PC-9 (cell line): ENCODE measurements at regions of chr2 and their contacts with region 1.

Region 1: GRCh38 chr2:61764035-61764800 is 89.6 kb downstream of the FAM161A start:
- DNase-seq: peak; percentile 95 to 99
- H3K4me3 ChIP-seq: peak overlapping the region; percentile 77
- H3K27ac ChIP-seq: peak overlapping the region; percentile 98
- H3K4me1 ChIP-seq: peaks cover 45% of the 10 kb centered on the region
- H3K27me3 ChIP-seq: no peaks in the 10 kb centered on the region
- CTCF ChIP-seq: no peak

Region 2: GRCh38 chr2:60699617-60700016 is 1064.6 kb before region 1 on chr2:
- CTCF ChIA-PET with region 1: no interaction called
- POLR2A ChIA-PET with region 1: interaction called, 13 read pairs
- intact Hi-C with region 1: no loop called
- DNase-seq: no peak
- H3K4me3 ChIP-seq: no peak overlapping the region
- H3K27ac ChIP-seq: no peak overlapping the region
- H3K4me1 ChIP-seq: no peaks in the 10 kb centered on the region
- H3K27me3 ChIP-seq: no peaks in the 10 kb centered on the region
- CTCF ChIP-seq: no peak

Region 3: DNA sequence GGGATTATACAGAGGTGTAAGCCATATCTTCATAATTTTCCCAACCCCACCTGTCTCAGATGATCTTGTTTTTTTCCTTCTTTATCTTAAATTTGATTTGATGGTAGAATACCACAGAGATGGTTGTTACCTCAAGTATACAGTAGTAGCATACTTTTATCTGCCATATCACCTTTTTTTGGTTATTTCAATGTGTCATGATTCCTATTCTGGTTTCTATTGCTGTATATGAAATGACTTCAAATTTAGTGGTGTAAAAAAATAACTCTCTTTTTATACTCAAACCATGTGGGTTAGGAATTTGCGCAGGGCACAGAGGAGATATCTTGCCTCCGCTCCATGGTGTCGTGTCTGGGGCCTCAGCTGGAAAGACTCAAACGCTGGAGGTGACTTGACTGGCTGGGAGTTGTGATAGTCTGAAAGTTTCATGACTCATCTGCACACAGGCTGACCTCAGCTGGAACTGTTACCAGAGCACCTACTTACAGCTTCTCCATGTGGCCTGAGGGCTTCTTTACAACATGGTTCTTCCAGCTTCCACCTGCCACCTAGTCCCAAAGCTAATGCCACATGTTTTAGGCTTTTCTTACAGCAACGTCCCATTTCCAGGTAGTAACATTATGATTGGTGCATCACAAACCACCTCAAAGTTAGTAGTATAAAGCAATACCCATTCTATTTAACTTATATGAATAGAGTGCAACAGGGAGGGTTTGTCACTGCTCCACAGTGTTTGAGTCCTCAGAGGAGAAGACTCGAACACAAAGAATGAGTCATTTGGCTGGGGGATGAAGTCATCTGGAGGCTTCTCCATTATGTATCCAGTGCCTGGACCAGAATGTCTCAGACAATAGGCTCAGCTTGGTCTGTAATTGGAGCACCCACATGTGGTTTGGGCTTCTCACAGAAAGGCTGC is 143.7 kb before region 1 on chr2:
- CTCF ChIA-PET with region 1: no interaction called
- POLR2A ChIA-PET with region 1: interaction called, 3 read pairs
- intact Hi-C with region 1: loop called (anchors 5 kb)
- DNase-seq: peak; percentile 72 to 93
- H3K4me3 ChIP-seq: no peak overlapping the region
- H3K27ac ChIP-seq: peak overlapping the region; percentile 56
- H3K4me1 ChIP-seq: peaks cover 22% of the 10 kb centered on the region
- H3K27me3 ChIP-seq: no peaks in the 10 kb centered on the region
- CTCF ChIP-seq: no peak

Region 4: DNA sequence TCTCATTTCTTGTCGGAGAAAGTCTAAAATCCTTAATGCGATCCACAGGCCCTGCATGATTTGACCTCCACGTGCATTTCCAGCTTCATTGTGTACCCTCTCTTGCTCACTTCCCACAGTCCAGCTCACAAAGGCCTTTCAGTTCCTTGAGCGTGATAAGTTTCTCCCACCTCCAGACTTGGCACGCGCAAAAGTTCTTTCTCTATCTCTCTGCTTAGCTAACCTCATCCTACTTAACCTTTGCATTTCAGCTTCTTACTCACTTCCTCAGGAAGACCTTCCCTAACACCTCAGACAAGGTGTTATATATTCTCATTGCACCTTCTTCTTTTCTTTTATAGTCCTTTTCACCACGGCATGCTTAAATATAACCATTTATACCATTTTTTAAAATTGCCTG is 101.2 kb before region 1 on chr2:
- CTCF ChIA-PET with region 1: no interaction called
- POLR2A ChIA-PET with region 1: no interaction called
- intact Hi-C with region 1: no loop called
- DNase-seq: no peak
- H3K4me3 ChIP-seq: no peak overlapping the region
- H3K27ac ChIP-seq: no peak overlapping the region
- H3K4me1 ChIP-seq: peaks cover 10% of the 10 kb centered on the region; the same call in 1 of the 2 replicates
- H3K27me3 ChIP-seq: no peaks in the 10 kb centered on the region
- CTCF ChIP-seq: no peak

Region 5: DNA sequence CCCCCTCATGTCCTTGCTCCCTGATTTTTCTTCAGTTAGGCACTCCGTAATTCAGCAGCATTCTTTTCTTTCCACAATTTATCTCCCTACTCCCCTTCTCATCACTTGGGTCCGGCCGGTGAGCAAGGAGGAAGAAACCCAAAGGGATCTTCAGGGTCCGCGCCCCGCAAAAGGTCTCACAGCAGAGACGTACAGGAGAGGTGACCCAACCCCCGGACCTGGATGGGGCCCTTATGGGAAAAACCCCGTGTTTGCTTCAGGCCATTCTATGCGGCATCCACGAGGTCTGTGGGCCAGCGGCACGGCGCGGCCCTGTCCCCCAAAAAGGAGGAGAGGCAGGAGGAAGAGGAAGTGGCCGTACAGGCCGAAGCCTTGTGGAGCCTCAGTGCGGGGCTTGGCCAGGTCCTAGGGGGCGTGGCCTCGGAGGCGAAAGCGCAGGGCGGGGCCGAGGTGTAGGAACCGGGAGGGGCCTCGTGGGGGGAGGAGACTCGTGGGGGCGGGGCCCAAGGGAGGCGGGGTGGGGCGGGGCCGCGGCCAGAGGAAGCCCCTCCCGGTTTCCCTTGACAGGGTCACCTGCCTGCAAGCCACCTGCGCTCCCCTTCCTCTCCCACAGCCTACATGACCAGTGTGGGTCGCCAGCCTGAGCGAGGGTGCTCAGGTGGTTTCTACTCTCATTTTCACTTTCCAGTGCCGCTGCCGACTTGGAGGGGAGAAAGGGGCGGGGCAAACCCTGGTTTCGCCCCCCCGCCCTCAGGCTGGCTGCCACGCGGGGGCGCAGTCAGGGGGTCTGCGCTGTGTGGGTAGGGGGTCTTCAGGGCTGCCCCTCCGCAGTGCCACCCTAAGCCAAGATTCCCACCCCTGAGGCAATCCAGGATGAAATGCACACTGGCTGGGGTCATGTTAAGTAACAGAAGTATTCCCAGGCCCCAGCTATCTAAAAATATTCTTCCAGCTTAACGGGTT is 69.6 kb before region 1 on chr2:
- CTCF ChIA-PET with region 1: no interaction called
- POLR2A ChIA-PET with region 1: no interaction called
- intact Hi-C with region 1: loop called (anchors 1 kb)
- DNase-seq: peak; percentile 74 to 97
- H3K4me3 ChIP-seq: peak overlapping the region; percentile 78
- H3K27ac ChIP-seq: peak overlapping the region; percentile 69
- H3K4me1 ChIP-seq: peaks cover 7% of the 10 kb centered on the region; the same call in 1 of the 2 replicates
- H3K27me3 ChIP-seq: no peaks in the 10 kb centered on the region
- CTCF ChIP-seq: peak; percentile 58

Region 6: GRCh38 chr2:61854474-61855182 is 90.4 kb after region 1 on chr2:
- CTCF ChIA-PET with region 1: no interaction called
- POLR2A ChIA-PET with region 1: interaction called, 3 read pairs
- intact Hi-C with region 1: loop called (anchors 1 kb)
- DNase-seq: peak; percentile 92 to 96
- H3K4me3 ChIP-seq: peak overlapping the region; percentile 86
- H3K27ac ChIP-seq: peak overlapping the region; percentile 49
- H3K4me1 ChIP-seq: peaks cover 14% of the 10 kb centered on the region
- H3K27me3 ChIP-seq: no peaks in the 10 kb centered on the region
- CTCF ChIP-seq: no peak; the same call in 1 of the 2 replicates

Region 7: GRCh38 chr2:61862085-61862484 is 97.9 kb after region 1 on chr2:
- CTCF ChIA-PET with region 1: no interaction called
- POLR2A ChIA-PET with region 1: interaction called, 10 read pairs
- intact Hi-C with region 1: no loop called
- DNase-seq: no peak
- H3K4me3 ChIP-seq: no peak overlapping the region
- H3K27ac ChIP-seq: no peak overlapping the region
- H3K4me1 ChIP-seq: no peaks in the 10 kb centered on the region
- H3K27me3 ChIP-seq: no peaks in the 10 kb centered on the region
- CTCF ChIP-seq: no peak